PC-9 (cell line): ENCODE measurements at regions of chr11 and their contacts with region 1.

Region 1: GRCh38 chr11:19433367-19433766 is 192.6 kb upstream of the E2F8 start:
- DNase-seq: no peak
- H3K4me3 ChIP-seq: no peak overlapping the region
- H3K27ac ChIP-seq: no peak overlapping the region
- H3K4me1 ChIP-seq: peaks cover 55% of the 10 kb centered on the region
- H3K27me3 ChIP-seq: no peaks in the 10 kb centered on the region
- CTCF ChIP-seq: no peak

Region 2: GRCh38 chr11:19200410-19201201 is 232.8 kb before region 1 on chr11:
- CTCF ChIA-PET with region 1: no interaction called
- POLR2A ChIA-PET with region 1: interaction called, 10 read pairs
- intact Hi-C with region 1: no loop called
- DNase-seq: peak; percentile 76 to 84
- H3K4me3 ChIP-seq: no peak overlapping the region
- H3K27ac ChIP-seq: 0 out of 2 replicates have a peak overlapping the region, but pooled peaks have one; percentile 4
- H3K4me1 ChIP-seq: peaks cover 21% of the 10 kb centered on the region
- H3K27me3 ChIP-seq: no peaks in the 10 kb centered on the region
- CTCF ChIP-seq: no peak